Heart right ventricle (tissue), 16 donors: ENCODE measurements at regions of chr12 and their contacts with region 1.

Region 1: DNA sequence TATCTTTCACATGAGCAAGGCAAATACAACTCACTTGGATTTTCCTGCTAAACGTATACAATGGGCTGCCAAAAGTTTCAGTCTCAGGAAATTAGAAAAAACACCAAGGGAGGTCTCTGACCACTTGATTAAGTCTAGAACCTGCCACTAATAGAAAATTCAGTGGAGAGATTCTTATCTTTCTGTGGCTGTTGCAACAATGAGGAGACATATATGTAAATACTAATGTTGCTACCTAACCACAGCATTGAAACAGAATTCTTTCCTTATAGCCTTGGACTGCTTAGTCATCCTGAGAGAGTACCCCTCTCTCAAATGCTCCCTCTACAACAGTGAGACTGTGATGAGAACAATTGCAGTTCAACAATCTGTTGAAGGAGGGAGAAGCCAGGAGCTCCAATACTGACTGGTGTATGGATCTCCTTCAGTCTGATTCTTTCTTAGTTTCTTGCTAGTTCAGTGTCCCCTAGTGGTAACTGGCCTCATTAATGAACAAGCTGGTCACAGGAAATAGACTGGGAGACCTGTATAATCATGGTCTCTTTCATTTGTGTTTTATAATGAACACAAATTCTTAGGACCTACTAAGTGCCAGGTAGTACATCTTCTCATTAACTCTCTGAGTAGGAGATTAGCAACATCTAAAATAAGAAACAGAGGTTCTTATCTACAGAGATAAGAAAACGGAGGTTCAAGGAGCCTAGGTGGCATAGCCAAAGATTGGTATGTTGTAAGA is 164.5 kb downstream of the SLC38A4 start:
- DNase-seq: peak in 1 of 2 donors; percentile 60
- ATAC-seq: peak; percentile 81 to 88 (median 84)
- H3K4me3 ChIP-seq: no peak overlapping the region
- H3K27ac ChIP-seq: peak overlapping the region in 8 of 10 donors; percentile 34 to 73 (median 65)
- H3K4me1 ChIP-seq: peaks cover 4 to 62% (median 43%) of the 10 kb centered on the region in 9 donors
- H3K27me3 ChIP-seq: no peaks in the 10 kb centered on the region
- CTCF ChIP-seq: peak; percentile 50 to 91 (median 84)

Region 2: GRCh38 chr12:46124848-46125619 is 536.2 kb before region 1 on chr12:
- intact Hi-C with region 1: loop called in 2 of 10 experiments (anchors 5 kb)
- DNase-seq: peak in 1 of 2 donors; percentile 65
- ATAC-seq: peak; percentile 85 to 94 (median 88)
- H3K4me3 ChIP-seq: peak overlapping the region in 3 of 10 donors; percentile 13 to 19 (median 17)
- H3K27ac ChIP-seq: no peak overlapping the region
- H3K4me1 ChIP-seq: peaks cover 0 to 14% (median 5%) of the 10 kb centered on the region in 9 donors
- H3K27me3 ChIP-seq: no peaks in the 10 kb centered on the region
- CTCF ChIP-seq: peak; percentile 37 to 81 (median 58)

Region 3: DNA sequence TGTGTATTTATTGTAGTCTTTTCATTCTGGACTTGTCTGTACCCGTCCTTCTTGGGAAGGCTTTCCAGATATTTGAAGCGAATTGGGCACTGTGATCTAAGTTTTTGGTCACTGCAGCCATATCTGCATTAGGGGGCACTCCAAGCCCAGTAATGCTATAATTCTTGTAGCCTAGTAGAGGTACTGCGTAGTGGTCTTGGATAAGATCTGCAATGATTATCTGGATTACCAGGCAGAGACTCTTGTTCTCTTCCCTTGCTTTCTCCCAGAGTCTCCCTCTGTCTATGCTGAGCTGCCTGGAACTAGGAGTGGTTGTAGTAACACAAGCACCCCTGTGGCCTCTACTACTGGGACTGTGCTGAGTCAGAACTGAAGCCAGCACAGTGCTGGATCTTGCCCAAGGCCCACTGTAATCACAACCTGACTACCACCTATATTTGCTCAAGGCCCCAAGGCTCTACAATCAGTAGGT is 318.7 kb before region 1 on chr12:
- intact Hi-C with region 1: loop called in 5 of 10 experiments (anchors 2 to 10 kb)
- DNase-seq: peak in 1 of 2 donors; percentile 32
- ATAC-seq: peak; percentile 47 to 89 (median 79)
- H3K4me3 ChIP-seq: no peak overlapping the region
- H3K27ac ChIP-seq: no peak overlapping the region
- H3K4me1 ChIP-seq: peaks cover 0 to 8% (median 0%) of the 10 kb centered on the region in 9 donors
- H3K27me3 ChIP-seq: no peaks in the 10 kb centered on the region
- CTCF ChIP-seq: peak; percentile 44 to 86 (median 66)

Region 4: DNA sequence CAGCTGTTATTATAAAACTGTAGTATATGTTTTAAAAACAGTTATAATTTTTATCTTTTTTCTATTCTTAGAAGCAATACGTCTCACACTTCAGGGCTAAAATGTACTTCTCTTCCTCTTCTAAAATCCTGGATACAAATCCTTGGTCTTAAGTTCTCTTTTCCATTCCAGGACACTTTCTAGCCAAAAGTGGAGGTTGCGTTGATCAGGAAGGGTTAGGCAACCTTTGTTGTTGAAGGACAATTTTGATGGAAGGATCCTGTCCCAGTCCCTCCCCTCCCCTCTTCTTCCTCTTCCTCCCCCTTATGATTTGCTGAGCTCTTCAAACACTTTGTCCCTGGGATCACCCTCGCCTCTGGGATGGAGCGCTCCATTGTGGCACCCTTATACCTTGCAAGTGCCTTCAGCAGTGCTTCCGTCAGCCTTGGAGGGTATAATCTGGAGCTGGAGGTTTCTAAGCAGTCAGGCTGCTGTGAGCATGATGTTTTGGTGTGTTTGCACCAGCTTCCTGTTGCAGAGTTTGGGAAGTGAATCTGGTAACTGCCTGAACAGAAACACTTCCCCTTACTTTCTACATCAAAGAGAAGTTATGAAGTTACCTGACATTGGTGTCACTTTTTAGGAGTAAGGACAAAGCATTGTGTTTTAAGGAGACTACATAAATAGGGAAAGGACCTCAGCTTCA is 201.3 kb before region 1 on chr12:
- intact Hi-C with region 1: loop called in 1 of 10 experiments (anchors 5 kb)
- DNase-seq: no peak
- ATAC-seq: peak in 4 of 8 donors; percentile 20 to 32 (median 30)
- H3K4me3 ChIP-seq: no peak overlapping the region
- H3K27ac ChIP-seq: peak overlapping the region in 4 of 10 donors; percentile 12 to 60 (median 28)
- H3K4me1 ChIP-seq: peaks cover 4 to 67% (median 47%) of the 10 kb centered on the region in 9 donors
- H3K27me3 ChIP-seq: no peaks in the 10 kb centered on the region
- CTCF ChIP-seq: no peak

Region 5: DNA sequence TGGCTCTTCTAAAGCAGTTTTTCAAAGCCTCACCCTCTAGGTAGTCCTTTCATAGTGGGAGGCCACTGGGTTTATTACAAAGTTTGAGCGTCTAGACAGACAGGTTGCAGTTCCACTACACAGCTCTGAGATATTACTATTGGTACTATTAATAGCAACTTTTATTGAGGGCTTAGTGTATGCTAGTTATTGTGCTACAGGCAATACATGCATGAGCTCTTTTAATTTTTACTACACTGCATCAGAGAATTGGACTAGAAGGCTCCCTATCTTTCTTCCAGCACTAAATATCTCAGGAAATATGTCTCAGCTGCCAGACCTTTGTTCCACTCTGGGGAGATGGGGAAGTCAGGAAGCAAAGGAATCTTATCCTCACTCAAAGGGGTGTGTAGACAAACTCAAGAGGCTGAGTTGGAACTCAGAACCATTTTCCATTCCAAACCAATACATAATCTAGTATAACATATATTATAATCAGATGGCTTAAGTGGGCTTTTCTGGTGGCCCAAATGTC is 126.9 kb before region 1 on chr12:
- intact Hi-C with region 1: loop called in 2 of 10 experiments (anchors 5 to 10 kb)
- DNase-seq: no peak
- ATAC-seq: peak in 6 of 8 donors; percentile 17 to 80 (median 49)
- H3K4me3 ChIP-seq: no peak overlapping the region
- H3K27ac ChIP-seq: peak overlapping the region in 6 of 10 donors; percentile 2 to 48 (median 14)
- H3K4me1 ChIP-seq: peaks cover 0 to 49% (median 35%) of the 10 kb centered on the region in 9 donors
- H3K27me3 ChIP-seq: no peaks in the 10 kb centered on the region
- CTCF ChIP-seq: no peak

Region 6: DNA sequence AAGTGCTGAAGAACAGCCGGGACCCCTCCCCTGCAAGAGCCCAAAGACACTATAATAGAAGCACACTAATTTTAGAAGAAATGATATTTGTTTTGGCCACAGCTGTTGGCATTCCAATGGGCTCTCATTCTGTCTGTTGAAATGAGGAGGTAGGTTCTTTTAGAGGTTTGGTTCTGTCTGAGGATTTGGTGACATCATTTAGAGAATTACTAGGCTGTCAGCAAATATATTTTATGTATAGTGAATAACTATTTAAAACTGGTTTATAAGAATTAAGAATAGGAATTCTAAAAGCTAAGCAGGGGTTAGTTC is 88.0 kb before region 1 on chr12:
- intact Hi-C with region 1: loop called in 2 of 10 experiments (anchors 10 kb)
- DNase-seq: no peak
- ATAC-seq: peak in 3 of 8 donors; percentile 29 to 47 (median 46)
- H3K4me3 ChIP-seq: no peak overlapping the region
- H3K27ac ChIP-seq: peak overlapping the region in 3 of 10 donors; percentile 4 to 24 (median 6)
- H3K4me1 ChIP-seq: peaks cover 0 to 31% (median 16%) of the 10 kb centered on the region in 9 donors
- H3K27me3 ChIP-seq: no peaks in the 10 kb centered on the region
- CTCF ChIP-seq: no peak